ENCODE measurements at regions of chr2 and their contacts with region 1.

Region 1: GRCh38 chr2:43226558-43226954 is at the start of gene ZFP36L2:
- DNase-seq: peak; percentile 97
- H3K4me3 ChIP-seq: peak within 1 kb of the TSS; percentile 98
- H3K27ac ChIP-seq: peak within 1 kb of the TSS; percentile 98
- H3K4me1 ChIP-seq: peaks cover 39% of the 10 kb centered on the region
- H3K27me3 ChIP-seq: no peaks in the 10 kb centered on the region
- CTCF ChIP-seq: no peak
- total RNA-seq, gene ZFP36L2: 20.4 and 23.4 TPM in 2 replicates

Region 2: DNA sequence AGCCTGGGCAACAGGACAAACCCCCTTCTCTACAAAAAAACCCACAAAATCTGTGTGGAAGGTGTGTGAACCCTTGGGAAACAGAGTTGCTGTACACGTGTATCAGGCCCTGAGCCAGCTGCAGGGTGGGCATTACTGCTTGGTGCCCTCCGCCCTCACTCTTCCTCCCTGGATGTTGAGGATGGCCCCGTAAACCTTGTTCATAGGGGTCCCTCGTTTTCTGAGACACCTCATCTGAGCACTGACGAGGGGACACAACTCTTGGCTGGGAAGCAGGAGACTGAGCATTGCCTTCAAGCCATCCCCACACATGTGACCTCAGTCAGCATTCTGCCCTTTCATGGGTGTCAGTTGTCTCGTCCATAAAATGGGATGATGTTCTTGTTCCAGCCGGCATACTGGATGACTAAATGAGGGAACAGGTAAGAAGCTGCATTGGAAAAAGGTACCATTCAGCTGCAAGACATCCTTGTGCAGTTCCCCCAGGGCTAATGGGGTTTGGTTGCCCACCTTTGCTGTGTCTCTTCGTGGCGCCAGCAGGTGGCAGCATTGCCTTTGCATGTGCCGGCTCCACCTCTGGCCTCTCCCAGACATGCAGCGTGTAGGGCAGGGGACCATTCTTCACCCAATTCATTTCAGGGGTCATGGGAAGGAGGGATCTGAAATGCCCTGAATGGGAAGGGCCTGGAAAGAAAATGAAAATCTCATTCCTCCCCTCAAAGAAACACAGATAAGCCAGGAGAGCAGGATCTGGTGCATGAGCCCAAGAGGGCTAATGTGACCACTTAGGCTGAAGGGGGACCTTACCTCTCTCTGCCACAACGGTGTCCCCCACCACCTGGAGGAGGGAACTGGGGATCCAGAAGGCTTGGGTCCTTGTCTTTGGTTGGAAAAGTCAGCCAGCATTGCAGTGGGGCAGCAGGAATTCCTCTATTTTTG is 397.8 kb before region 1 on chr2:
- CTCF ChIA-PET with region 1: no interaction called
- POLR2A ChIA-PET with region 1: no interaction called
- intact Hi-C with region 1: loop called (anchors 2 kb)
- DNase-seq: peak; percentile 72
- H3K4me3 ChIP-seq: no peak overlapping the region
- H3K27ac ChIP-seq: no peak overlapping the region
- H3K4me1 ChIP-seq: peaks cover 25% of the 10 kb centered on the region
- H3K27me3 ChIP-seq: no peaks in the 10 kb centered on the region
- CTCF ChIP-seq: peak; percentile 95

Region 3: GRCh38 chr2:42944779-42945415 is 281.7 kb before region 1 on chr2:
- CTCF ChIA-PET with region 1: no interaction called
- POLR2A ChIA-PET with region 1: no interaction called
- intact Hi-C with region 1: loop called (anchors 2 kb)
- DNase-seq: peak; percentile 39
- H3K4me3 ChIP-seq: no peak overlapping the region
- H3K27ac ChIP-seq: no peak overlapping the region
- H3K4me1 ChIP-seq: no peaks in the 10 kb centered on the region
- H3K27me3 ChIP-seq: no peaks in the 10 kb centered on the region
- CTCF ChIP-seq: no peak

Region 4: DNA sequence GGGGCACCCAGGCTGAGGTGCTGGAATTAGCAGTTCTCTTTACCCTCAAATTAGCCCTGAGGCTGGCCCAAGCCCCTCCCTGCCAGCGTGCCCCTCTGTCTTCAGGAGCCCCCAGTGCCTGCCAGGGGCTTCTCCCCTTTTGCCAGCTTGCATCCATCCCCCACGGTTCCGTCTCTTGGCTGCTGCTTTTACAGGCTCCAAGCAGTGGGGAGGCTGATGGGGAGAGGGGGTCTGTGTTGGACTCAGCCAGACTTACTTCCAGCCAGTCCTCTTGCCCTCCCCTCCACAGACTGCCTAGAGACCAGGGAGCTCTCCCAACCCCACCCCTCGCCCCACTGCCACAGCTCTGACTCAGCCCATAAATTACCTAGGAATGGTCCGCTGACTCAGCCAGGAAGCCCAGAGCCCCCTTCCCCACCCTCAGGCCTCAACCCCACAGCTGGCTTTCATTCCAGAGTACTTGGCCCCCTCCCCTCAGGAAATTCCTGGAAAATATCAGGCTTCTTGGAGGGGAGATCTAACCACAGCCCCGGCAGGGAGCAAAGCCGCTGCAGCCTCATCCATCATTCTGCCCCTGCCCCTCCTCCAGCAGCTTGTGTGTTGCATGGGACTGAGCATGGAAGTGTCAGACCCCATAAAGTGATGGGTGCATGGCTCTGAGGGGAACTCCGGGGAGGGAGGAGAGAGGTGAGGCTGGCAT is 184.7 kb before region 1 on chr2:
- CTCF ChIA-PET with region 1: interaction called, 3 read pairs
- POLR2A ChIA-PET with region 1: no interaction called
- intact Hi-C with region 1: loop called (anchors 5 kb)
- DNase-seq: peak; percentile 93
- H3K4me3 ChIP-seq: no peak overlapping the region
- H3K27ac ChIP-seq: peak overlapping the region; percentile 31
- H3K4me1 ChIP-seq: peaks cover 36% of the 10 kb centered on the region
- H3K27me3 ChIP-seq: no peaks in the 10 kb centered on the region
- CTCF ChIP-seq: no peak

Region 5: GRCh38 chr2:43210467-43211303 is 15.9 kb before region 1 on chr2:
- CTCF ChIA-PET with region 1: interaction called, 10 read pairs
- POLR2A ChIA-PET with region 1: no interaction called
- intact Hi-C with region 1: no loop called
- DNase-seq: no peak
- H3K4me3 ChIP-seq: no peak overlapping the region
- H3K27ac ChIP-seq: no peak overlapping the region
- H3K4me1 ChIP-seq: no peaks in the 10 kb centered on the region
- H3K27me3 ChIP-seq: no peaks in the 10 kb centered on the region
- CTCF ChIP-seq: no peak

Region 6: DNA sequence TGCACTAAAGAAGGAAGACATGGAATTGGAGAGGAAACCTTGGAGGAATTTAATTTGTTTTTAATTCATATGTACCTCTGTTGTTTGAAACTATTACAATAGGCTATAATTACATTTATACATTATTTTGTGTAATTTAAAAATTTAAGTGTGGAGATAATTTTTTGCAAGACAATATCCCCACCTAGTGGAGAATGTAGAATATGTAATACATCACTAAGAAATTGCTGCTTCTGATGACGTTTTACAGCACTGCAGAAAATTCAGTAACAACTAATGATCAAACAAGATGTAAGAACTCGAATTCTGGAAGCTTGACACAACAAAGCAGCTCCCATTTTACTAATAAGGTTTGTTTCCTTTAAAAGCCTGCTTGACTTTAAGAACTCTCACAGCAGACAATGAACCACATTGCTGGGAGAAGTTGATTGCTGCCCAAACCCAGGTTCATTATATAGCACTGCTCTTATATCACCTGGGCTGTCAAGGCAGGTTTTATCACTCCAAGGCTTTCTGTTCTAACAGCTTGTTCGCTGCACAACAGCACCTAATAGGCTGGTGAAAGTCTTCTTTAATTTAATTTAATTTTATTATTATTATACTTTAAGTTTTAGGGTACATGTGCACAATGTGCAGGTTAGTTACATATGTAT is 315.9 kb after region 1 on chr2:
- CTCF ChIA-PET with region 1: no interaction called
- POLR2A ChIA-PET with region 1: no interaction called
- intact Hi-C with region 1: loop called (anchors 5 kb)
- DNase-seq: peak; percentile 63
- H3K4me3 ChIP-seq: no peak overlapping the region
- H3K27ac ChIP-seq: no peak overlapping the region
- H3K4me1 ChIP-seq: no peaks in the 10 kb centered on the region
- H3K27me3 ChIP-seq: no peaks in the 10 kb centered on the region
- CTCF ChIP-seq: peak; percentile 67